ENCODE measurements at regions of chr2 and their contacts with region 1.

Region 1: GRCh38 chr2:159118115-159118858 is 149.8 kb downstream of the TANC1 start:
- DNase-seq: peak; percentile 81
- H3K4me3 Mint-ChIP-seq: no peak overlapping the region
- H3K27ac Mint-ChIP-seq: no peak overlapping the region
- H3K4me1 Mint-ChIP-seq: peaks cover 35% of the 10 kb centered on the region
- H3K27me3 Mint-ChIP-seq: no peaks in the 10 kb centered on the region
- CTCF ChIP-seq: peak; percentile 86

Region 2: GRCh38 chr2:158903711-158904443 is 214.4 kb before region 1 on chr2:
- CTCF ChIA-PET with region 1: interaction called, 5 read pairs
- intact Hi-C with region 1: loop called (anchors 1 kb)
- DNase-seq: no peak
- H3K4me3 Mint-ChIP-seq: no peak overlapping the region
- H3K27ac Mint-ChIP-seq: no peak overlapping the region
- H3K4me1 Mint-ChIP-seq: no peaks in the 10 kb centered on the region
- H3K27me3 Mint-ChIP-seq: no peaks in the 10 kb centered on the region
- CTCF ChIP-seq: no peak

Region 3: GRCh38 chr2:159035790-159036411 is 82.4 kb before region 1 on chr2:
- CTCF ChIA-PET with region 1: interaction called, 38 read pairs
- intact Hi-C with region 1: loop called (anchors 1 kb)
- DNase-seq: peak; percentile 55
- H3K4me3 Mint-ChIP-seq: no peak overlapping the region
- H3K27ac Mint-ChIP-seq: no peak overlapping the region
- H3K4me1 Mint-ChIP-seq: peaks cover 32% of the 10 kb centered on the region
- H3K27me3 Mint-ChIP-seq: no peaks in the 10 kb centered on the region
- CTCF ChIP-seq: no peak

Region 4: DNA sequence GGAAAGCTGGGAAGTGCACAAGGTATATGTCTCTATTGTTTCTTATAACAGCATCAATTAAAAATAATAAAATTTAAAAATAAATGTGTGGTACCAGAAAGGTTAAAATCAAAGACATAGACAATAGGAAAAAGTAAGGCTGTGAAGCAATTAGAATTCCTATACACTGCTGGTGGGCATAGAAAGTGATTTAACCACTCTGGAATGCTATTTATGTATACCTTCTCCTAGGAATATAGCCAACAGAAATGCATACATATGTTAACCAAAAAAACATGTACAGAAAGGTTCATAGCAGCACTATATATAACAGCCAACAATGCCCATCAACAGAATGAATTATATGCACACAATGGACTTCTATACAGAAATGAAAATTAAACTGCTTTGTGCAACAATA is 125.2 kb after region 1 on chr2:
- CTCF ChIA-PET with region 1: no interaction called
- intact Hi-C with region 1: no loop called
- DNase-seq: no peak
- H3K4me3 Mint-ChIP-seq: no peak overlapping the region
- H3K27ac Mint-ChIP-seq: no peak overlapping the region
- H3K4me1 Mint-ChIP-seq: no peaks in the 10 kb centered on the region
- H3K27me3 Mint-ChIP-seq: no peaks in the 10 kb centered on the region
- CTCF ChIP-seq: no peak